Activated CD8-positive, alpha-beta memory T cell treated with anti-CD3 and anti-CD28 coated beads, Interleukin-2, amount 10 ng/mL, durations not matched to agents 7 days and 5 days (primary cell): ENCODE measurements at regions of chr12 and their contacts with region 1.

Region 1: GRCh38 chr12:89542912-89543592 is 17.2 kb upstream of the POC1B start:
- DNase-seq: peak; percentile 72
- ATAC-seq: peak; percentile 82
- H3K4me3 Mint-ChIP-seq: no peak overlapping the region
- H3K27ac Mint-ChIP-seq: no peak overlapping the region
- H3K4me1 Mint-ChIP-seq: peaks cover 7% of the 10 kb centered on the region
- H3K27me3 Mint-ChIP-seq: no peaks in the 10 kb centered on the region

Region 2: GRCh38 chr12:89603678-89604077 is 60.6 kb after region 1 on chr12:
- CTCF ChIA-PET with region 1: no interaction called
- DNase-seq: no peak
- ATAC-seq: no peak
- H3K4me3 Mint-ChIP-seq: no peak overlapping the region
- H3K27ac Mint-ChIP-seq: no peak overlapping the region
- H3K4me1 Mint-ChIP-seq: peaks cover 2% of the 10 kb centered on the region
- H3K27me3 Mint-ChIP-seq: no peaks in the 10 kb centered on the region

Region 3: GRCh38 chr12:90102957-90103652 is 560.1 kb after region 1 on chr12:
- CTCF ChIA-PET with region 1: interaction called, 14 read pairs
- DNase-seq: no peak
- ATAC-seq: peak; percentile 63
- H3K4me3 Mint-ChIP-seq: no peak overlapping the region
- H3K27ac Mint-ChIP-seq: no peak overlapping the region
- H3K4me1 Mint-ChIP-seq: peaks cover 5% of the 10 kb centered on the region
- H3K27me3 Mint-ChIP-seq: peaks cover 8% of the 10 kb centered on the region